Heart left ventricle (tissue), 16 donors: ENCODE measurements at regions of chr20 and their contacts with region 1.

Region 1: DNA sequence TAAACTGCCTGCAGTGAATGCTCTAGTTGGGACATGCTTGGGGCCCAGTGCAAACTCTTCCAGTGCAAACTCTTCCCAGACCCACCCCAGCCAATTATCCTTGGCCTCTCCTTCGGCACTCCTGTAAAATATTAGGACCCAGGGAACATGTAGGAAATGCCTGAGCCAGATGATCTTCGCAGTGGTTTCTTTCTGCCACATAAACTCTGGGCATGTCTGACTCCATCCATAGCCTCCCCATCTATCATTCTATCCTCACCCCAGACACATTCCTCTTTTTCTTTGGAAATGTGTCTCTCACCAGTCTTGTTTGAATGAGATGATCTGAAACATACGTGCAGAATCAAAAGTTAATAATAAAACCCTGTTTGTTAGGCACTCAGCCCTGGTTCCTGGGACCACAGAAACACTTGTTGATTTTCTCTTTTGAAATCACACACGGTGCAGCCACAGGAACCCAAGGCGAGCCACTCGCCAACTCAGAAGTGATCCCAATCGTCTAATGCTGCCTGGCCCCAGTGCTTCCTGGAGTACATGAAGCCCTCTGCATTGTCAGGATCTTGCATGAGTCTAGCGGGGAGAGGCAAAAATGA is 108.9 kb upstream of the CST7 start:
- DNase-seq: no peak
- ATAC-seq: no peak
- H3K4me3 ChIP-seq: no peak overlapping the region
- H3K27ac ChIP-seq: no peak overlapping the region
- H3K4me1 ChIP-seq: no peaks in the 10 kb centered on the region
- H3K27me3 ChIP-seq: peaks cover 0 to 11% (median 0%) of the 10 kb centered on the region in 9 donors
- CTCF ChIP-seq: no peak
- POLR2A ChIP-seq: no peak

Region 2: DNA sequence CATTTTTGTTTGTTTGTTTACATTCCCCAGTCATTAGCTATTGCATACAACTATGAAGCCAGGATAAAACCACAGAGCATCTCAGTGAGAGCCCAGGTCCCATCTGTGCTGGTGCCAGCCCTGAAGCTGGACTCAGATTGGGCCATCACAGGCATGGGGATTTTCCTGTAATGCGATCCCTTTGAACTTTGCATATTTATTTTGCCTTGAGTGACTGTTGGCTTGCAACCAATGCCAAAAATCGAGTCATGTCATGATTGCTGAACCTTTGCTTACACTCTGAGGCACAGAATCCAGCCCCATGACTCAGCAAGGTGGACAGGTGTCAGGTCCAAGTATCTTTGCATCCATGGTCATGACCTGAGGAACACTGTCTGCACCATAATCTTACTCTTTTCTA is 805.4 kb before region 1 on chr20:
- intact Hi-C with region 1: no loop called
- DNase-seq: no peak
- ATAC-seq: no peak
- H3K4me3 ChIP-seq: no peak overlapping the region
- H3K27ac ChIP-seq: no peak overlapping the region
- H3K4me1 ChIP-seq: peaks cover 0 to 10% (median 0%) of the 10 kb centered on the region in 12 donors
- H3K27me3 ChIP-seq: no peaks in the 10 kb centered on the region
- CTCF ChIP-seq: no peak
- POLR2A ChIP-seq: no peak

Region 3: GRCh38 chr20:24821391-24821790 is 18.8 kb before region 1 on chr20:
- intact Hi-C with region 1: loop called in 1 of 10 experiments (anchors 2 kb)
- DNase-seq: no peak
- ATAC-seq: no peak
- H3K4me3 ChIP-seq: no peak overlapping the region
- H3K27ac ChIP-seq: no peak overlapping the region
- H3K4me1 ChIP-seq: no peaks in the 10 kb centered on the region
- H3K27me3 ChIP-seq: no peaks in the 10 kb centered on the region
- CTCF ChIP-seq: no peak
- POLR2A ChIP-seq: no peak